ENCODE measurements at regions of chr15 and their contacts with region 1.

Region 1: GRCh38 chr15:72685925-72686794 is at the starts of genes BBS4 and HIGD2B:
- DNase-seq: peak; percentile 78
- ATAC-seq: peak; percentile 98
- H3K4me3 ChIP-seq: peak within 1 kb of the TSS; percentile 81 to 99
- H3K27ac ChIP-seq: peak within 1 kb of the TSS; percentile 97
- H3K4me1 ChIP-seq: peaks cover 4% of the 10 kb centered on the region
- H3K27me3 ChIP-seq: no peaks in the 10 kb centered on the region
- CTCF ChIP-seq: no peak
- total RNA-seq, gene BBS4: 17.9 TPM
- total RNA-seq, gene HIGD2B: 0.21 TPM

Region 2: GRCh38 chr15:72353265-72353664 is 332.9 kb before region 1 on chr15:
- CTCF ChIA-PET with region 1: no interaction called
- POLR2A ChIA-PET with region 1: interaction called, 14 read pairs
- in situ Hi-C with region 1: no loop called
- intact Hi-C with region 1: no loop called
- DNase-seq: no peak
- ATAC-seq: no peak
- H3K4me3 ChIP-seq: no peak overlapping the region
- H3K27ac ChIP-seq: no peak overlapping the region
- H3K4me1 ChIP-seq: no peaks in the 10 kb centered on the region
- H3K27me3 ChIP-seq: no peaks in the 10 kb centered on the region
- CTCF ChIP-seq: no peak

Measured in Panc1 (cell line).